Heart right ventricle (tissue), 16 donors: ENCODE measurements at regions of chr13 and their contacts with region 1.

Region 1: GRCh38 chr13:19782049-19782726 is 557 bp downstream of the PSPC1 start:
- DNase-seq: peak; percentile 49 to 60
- ATAC-seq: peak; percentile 67 to 79 (median 74)
- H3K4me3 ChIP-seq: peak overlapping the region; percentile 89 to 100 (median 95)
- H3K27ac ChIP-seq: peak overlapping the region; percentile 77 to 98 (median 96)
- H3K4me1 ChIP-seq: peaks cover 0 to 14% (median 10%) of the 10 kb centered on the region in 9 donors
- H3K27me3 ChIP-seq: no peaks in the 10 kb centered on the region
- CTCF ChIP-seq: no peak

Region 2: GRCh38 chr13:19633479-19634255 is 148.5 kb before region 1 on chr13 and contains the start of gene MPHOSPH8:
- intact Hi-C with region 1: loop called in 4 of 10 experiments (anchors 5 to 10 kb)
- DNase-seq: peak; percentile 93 to 97
- ATAC-seq: peak; percentile 98 to 100 (median 99)
- H3K4me3 ChIP-seq: peak within 1 kb of the TSS; percentile 55 to 97 (median 84)
- H3K27ac ChIP-seq: peak within 1 kb of the TSS; percentile 85 to 97 (median 93)
- H3K4me1 ChIP-seq: peaks cover 2 to 45% (median 30%) of the 10 kb centered on the region in 9 donors
- H3K27me3 ChIP-seq: no peaks in the 10 kb centered on the region
- CTCF ChIP-seq: no peak
- total RNA-seq, gene MPHOSPH8: 20.4 to 35.4 (median 31.0) TPM

Region 3: DNA sequence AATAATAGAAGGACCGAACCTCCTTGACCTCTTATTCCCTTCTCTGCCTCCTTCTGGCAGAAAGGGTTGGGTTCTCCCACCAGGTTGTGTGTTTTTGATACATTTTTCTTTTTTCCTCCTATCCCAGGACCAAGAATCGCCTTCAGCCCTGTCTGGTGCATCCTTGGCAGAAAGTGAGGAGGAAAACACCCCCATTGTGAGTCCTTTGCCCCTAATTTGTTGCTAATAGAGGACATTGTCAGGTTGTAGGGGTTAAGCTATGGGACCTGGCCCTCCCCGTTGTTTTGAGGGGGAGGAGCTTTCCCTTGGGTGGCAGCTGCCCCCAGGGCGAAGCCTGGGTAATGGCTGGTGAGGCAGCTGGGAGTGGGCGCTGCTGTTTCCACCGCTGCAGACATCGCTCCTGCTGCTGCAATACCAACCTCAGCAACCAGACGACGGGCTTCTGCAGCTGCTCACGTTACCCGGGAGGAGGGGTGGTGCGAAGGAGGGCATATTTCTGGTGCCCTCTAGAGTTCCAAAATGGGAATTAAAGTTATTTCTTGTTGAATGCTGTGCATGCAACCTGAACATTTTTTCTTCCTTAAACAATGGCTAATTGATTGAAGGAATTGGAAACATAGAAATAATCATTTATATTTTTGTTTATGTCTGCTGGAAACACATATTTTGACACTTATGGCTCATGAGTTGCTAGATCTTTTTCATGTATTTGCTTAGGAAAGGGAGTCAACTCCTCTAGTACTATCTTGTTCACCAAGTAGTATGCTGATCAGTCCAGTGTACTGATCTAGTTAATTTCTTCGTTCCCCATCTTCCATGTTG is 177.9 kb after region 1 on chr13:
- intact Hi-C with region 1: loop called in 1 of 10 experiments (anchors 5 kb)
- DNase-seq: peak; percentile 78 to 85
- ATAC-seq: peak; percentile 34 to 73 (median 58)
- H3K4me3 ChIP-seq: peak overlapping the region; percentile 63 to 93 (median 88)
- H3K27ac ChIP-seq: peak overlapping the region; percentile 89 to 100 (median 98)
- H3K4me1 ChIP-seq: peaks cover 2 to 55% (median 38%) of the 10 kb centered on the region in 9 donors
- H3K27me3 ChIP-seq: no peaks in the 10 kb centered on the region
- CTCF ChIP-seq: peak; percentile 77 to 97 (median 87)